CD14-positive monocyte (primary cell): ENCODE measurements at regions of chr7 and their contacts with region 1.

Region 1: GRCh38 chr7:30284298-30285066 is at the start of gene ZNRF2:
- DNase-seq: peak; percentile 98 to 99 (median 99)
- H3K4me3 ChIP-seq: peak within 1 kb of the TSS; percentile 55 to 83 (median 83)
- H3K4me3 Mint-ChIP-seq: peak within 1 kb of the TSS; percentile 78 to 87
- H3K27ac ChIP-seq: peak within 1 kb of the TSS; percentile 73 to 86
- H3K27ac Mint-ChIP-seq: peak within 1 kb of the TSS; percentile 82 to 95 (median 94)
- H3K4me1 ChIP-seq: peaks cover 24 to 36% of the 10 kb centered on the region in 2 donors
- H3K4me1 Mint-ChIP-seq: peaks cover 42% of the 10 kb centered on the region
- H3K27me3 ChIP-seq: no peaks in the 10 kb centered on the region
- H3K27me3 Mint-ChIP-seq: no peaks in the 10 kb centered on the region
- CTCF ChIP-seq: peak; percentile 44
- polyA plus RNA-seq, gene ZNRF2: 1.9 to 9.5 (median 5.7) TPM

Region 2: GRCh38 chr7:30164567-30164966 is 119.9 kb before region 1 on chr7:
- intact Hi-C with region 1: loop called (anchors 5 kb)
- DNase-seq: peak; percentile 63 to 77 (median 76)
- H3K4me3 ChIP-seq: no peak overlapping the region
- H3K4me3 Mint-ChIP-seq: peak overlapping the region in 1 of 2 donors; percentile 50
- H3K27ac ChIP-seq: peak overlapping the region in 1 of 2 donors; percentile 68
- H3K27ac Mint-ChIP-seq: peak overlapping the region; percentile 5 to 73 (median 37)
- H3K4me1 ChIP-seq: peaks cover 65 to 67% of the 10 kb centered on the region in 2 donors
- H3K4me1 Mint-ChIP-seq: peaks cover 74% of the 10 kb centered on the region
- H3K27me3 ChIP-seq: no peaks in the 10 kb centered on the region
- H3K27me3 Mint-ChIP-seq: peaks cover 0 to 1% (median 0%) of the 10 kb centered on the region in 3 donors
- CTCF ChIP-seq: peak; percentile 78

Region 3: DNA sequence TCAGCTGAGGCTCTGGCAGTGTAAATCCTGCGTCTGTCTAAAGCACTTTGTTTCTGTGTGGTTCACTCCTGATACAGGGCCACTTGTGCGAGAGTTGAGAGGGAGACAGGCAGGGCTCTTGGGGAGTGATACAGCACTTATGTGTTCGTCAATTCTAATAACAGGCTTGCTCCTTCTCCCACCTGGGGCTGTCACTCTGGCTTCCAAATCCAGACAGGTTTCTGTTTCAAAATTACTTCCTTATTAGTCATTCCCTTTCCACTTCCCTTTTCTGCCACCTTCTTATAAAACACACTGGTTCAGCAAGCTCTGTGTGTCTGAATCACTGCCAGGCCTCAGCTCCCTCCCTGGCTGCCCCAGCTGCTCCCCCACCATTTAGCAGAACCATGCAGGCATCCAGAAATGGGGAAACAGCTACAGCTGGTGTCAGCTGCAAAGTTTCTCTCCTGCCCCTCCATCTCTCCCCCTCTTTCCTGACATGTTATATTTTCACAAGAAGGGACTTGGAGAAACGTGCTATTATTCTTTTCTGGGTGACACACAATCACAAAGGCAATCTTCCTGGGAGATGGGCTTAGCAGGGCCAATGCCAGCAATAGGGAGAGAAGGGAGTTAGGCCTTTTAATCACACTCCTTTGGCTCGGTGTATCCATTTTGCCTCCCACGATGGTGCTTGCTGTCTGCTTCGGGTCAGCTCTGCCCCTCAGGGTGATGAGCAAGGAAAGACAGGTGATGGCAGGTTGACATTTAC is 58.4 kb before region 1 on chr7:
- intact Hi-C with region 1: loop called in 1 of 2 experiments (anchors 5 kb)
- DNase-seq: peak; percentile 97 to 99 (median 99)
- H3K4me3 ChIP-seq: peak overlapping the region in 1 of 3 experiments; percentile 45
- H3K4me3 Mint-ChIP-seq: peak overlapping the region; percentile 28 to 87
- H3K27ac ChIP-seq: peak overlapping the region; percentile 89 to 95
- H3K27ac Mint-ChIP-seq: peak overlapping the region; percentile 97 to 99 (median 99)
- H3K4me1 ChIP-seq: peaks cover 46 to 50% of the 10 kb centered on the region in 2 donors
- H3K4me1 Mint-ChIP-seq: peaks cover 48% of the 10 kb centered on the region
- H3K27me3 ChIP-seq: no peaks in the 10 kb centered on the region
- H3K27me3 Mint-ChIP-seq: peaks cover 0 to 7% (median 3%) of the 10 kb centered on the region in 3 donors
- CTCF ChIP-seq: no peak

Region 4: GRCh38 chr7:30330134-30331111 is 45.9 kb after region 1 on chr7:
- intact Hi-C with region 1: loop called in 1 of 2 experiments (anchors 10 kb)
- DNase-seq: peak in 2 of 3 donors; percentile 29 to 42
- H3K4me3 ChIP-seq: peak overlapping the region in 1 of 3 experiments; percentile 57
- H3K4me3 Mint-ChIP-seq: peak overlapping the region; percentile 1 to 77
- H3K27ac ChIP-seq: peak overlapping the region in 1 of 2 donors; percentile 42
- H3K27ac Mint-ChIP-seq: peak overlapping the region in 6 of 7 donors; percentile 6 to 81 (median 70)
- H3K4me1 ChIP-seq: peaks cover 24 to 32% of the 10 kb centered on the region in 2 donors
- H3K4me1 Mint-ChIP-seq: peaks cover 50% of the 10 kb centered on the region
- H3K27me3 ChIP-seq: no peaks in the 10 kb centered on the region
- H3K27me3 Mint-ChIP-seq: peaks cover 0 to 1% (median 1%) of the 10 kb centered on the region in 3 donors
- CTCF ChIP-seq: no peak

Region 5: DNA sequence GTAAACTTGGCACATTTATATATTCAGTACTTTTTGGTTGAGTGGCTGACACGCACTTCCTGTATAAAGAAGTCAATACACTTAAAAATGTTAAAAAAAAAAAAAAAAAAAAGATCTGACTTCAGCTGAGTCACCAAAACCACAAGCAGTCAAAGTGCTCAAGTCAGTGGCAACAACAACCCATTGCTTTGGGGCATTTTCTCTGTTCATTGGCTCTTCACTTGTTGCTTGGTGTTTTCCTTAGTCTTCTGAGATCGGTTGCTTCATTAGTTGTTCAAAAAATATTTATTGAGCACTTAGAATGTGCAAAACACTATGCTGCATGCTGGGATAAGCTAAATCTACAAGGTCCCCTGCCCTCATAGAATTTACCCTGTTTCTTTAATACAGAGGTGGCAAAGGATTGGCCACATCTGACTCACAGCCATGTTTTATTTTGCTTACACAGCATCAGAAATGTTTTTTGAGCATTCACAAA is 63.6 kb after region 1 on chr7:
- intact Hi-C with region 1: loop called in 1 of 2 experiments (anchors 2 kb)
- DNase-seq: peak; percentile 76 to 90 (median 83)
- H3K4me3 ChIP-seq: peak overlapping the region in 1 of 3 experiments; percentile 48
- H3K4me3 Mint-ChIP-seq: peak overlapping the region; percentile 4 to 74
- H3K27ac ChIP-seq: peak overlapping the region in 1 of 2 donors; percentile 89
- H3K27ac Mint-ChIP-seq: peak overlapping the region; percentile 83 to 93 (median 90)
- H3K4me1 ChIP-seq: peaks cover 60 to 82% of the 10 kb centered on the region in 2 donors
- H3K4me1 Mint-ChIP-seq: peaks cover 69% of the 10 kb centered on the region
- H3K27me3 ChIP-seq: no peaks in the 10 kb centered on the region
- H3K27me3 Mint-ChIP-seq: no peaks in the 10 kb centered on the region
- CTCF ChIP-seq: no peak

Region 6: DNA sequence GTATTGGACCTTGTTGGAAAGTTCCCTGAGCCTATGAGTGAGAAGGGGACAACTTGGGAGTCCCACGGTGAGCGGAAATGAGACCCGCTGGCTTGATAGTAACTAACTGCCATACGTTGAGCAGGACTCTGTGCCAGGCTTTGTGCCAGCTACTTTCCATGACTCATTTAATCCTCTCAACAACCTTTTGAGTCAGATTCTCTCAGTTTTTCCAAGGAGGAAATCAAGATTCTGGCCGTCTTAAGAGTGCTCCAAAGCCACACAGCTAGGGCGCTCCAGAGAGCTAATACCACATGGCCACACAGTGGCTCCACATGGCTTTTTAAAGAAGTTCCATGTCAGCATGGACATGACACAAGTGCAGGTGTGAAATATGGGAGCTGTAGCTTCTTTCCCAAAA is 138.4 kb after region 1 on chr7:
- intact Hi-C with region 1: loop called in 1 of 2 experiments (anchors 10 kb)
- DNase-seq: no peak
- H3K4me3 ChIP-seq: no peak overlapping the region
- H3K4me3 Mint-ChIP-seq: no peak overlapping the region
- H3K27ac ChIP-seq: no peak overlapping the region
- H3K27ac Mint-ChIP-seq: no peak overlapping the region
- H3K4me1 ChIP-seq: peaks cover 30 to 37% of the 10 kb centered on the region in 2 donors
- H3K4me1 Mint-ChIP-seq: peaks cover 42% of the 10 kb centered on the region
- H3K27me3 ChIP-seq: no peaks in the 10 kb centered on the region
- H3K27me3 Mint-ChIP-seq: no peaks in the 10 kb centered on the region
- CTCF ChIP-seq: no peak

Region 7: DNA sequence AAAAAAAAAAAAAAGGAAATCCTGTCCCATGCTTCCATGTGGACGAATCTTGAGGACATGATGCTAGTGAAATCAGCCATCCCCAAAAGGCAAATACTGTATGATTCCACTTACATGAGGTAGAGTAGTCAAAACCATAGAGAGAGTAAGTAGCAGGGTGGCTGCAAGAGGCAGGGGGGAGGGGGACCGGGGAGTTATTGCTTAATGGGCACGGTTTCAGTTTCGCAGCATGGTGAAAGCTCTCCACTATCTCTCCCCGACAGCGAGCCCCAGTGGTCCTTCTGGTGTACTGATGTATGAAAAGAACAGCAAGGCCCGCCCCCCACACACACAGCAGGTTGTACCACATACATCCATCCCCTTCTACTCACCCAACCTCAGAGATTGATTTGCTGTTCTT is 161.3 kb after region 1 on chr7:
- intact Hi-C with region 1: loop called in 1 of 2 experiments (anchors 5 kb)
- DNase-seq: peak; percentile 89 to 91 (median 90)
- H3K4me3 ChIP-seq: no peak overlapping the region
- H3K4me3 Mint-ChIP-seq: peak overlapping the region in 1 of 2 donors; percentile 21
- H3K27ac ChIP-seq: peak overlapping the region in 1 of 2 donors; percentile 21
- H3K27ac Mint-ChIP-seq: peak overlapping the region; percentile 17 to 85 (median 71)
- H3K4me1 ChIP-seq: peaks cover 10 to 14% of the 10 kb centered on the region in 2 donors
- H3K4me1 Mint-ChIP-seq: peaks cover 6% of the 10 kb centered on the region
- H3K27me3 ChIP-seq: no peaks in the 10 kb centered on the region
- H3K27me3 Mint-ChIP-seq: no peaks in the 10 kb centered on the region
- CTCF ChIP-seq: peak; percentile 76

Region 8: DNA sequence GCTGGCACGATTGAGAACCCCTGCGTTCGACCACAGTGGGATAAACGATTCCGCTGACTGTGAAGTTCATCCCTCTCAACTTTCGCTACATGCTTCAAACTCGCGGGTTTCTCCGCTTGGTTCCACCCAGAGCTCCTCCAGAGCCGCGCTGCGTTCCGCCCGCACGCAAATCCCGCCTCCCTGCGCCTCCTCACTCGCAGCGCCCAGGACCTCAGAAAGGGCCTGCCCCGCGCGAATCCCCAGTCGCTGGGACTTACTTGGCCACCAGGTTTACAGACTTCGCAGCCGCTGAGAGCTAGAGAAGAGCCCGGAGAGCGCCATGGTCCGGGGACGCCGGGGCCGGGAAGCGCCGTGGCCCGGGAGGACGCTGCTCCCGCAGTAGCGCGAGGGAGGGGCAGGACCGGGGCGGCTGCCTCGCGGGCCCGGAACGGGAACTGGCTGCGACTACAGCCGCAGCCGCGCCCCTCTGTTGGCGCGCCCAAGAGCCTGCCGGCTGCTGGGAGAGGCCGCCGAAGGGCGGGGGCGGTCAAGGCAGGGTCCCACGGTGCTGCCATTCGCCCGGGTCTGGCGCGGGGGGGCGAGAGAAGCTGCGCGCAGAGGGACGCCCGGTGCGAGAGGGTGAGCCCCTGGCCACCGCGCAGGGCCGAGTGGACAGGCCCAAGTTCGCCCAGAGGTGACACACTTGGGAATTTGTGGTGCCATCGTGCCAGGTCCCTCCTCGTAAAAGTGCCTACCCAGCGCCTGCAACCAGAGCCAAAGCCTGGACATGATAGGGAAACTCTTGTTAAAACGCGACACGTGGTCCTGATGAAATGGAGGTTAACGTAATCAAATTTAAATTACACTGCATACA is 194.1 kb after region 1 on chr7 and contains the start of gene NOD1:
- intact Hi-C with region 1: no loop called
- DNase-seq: peak; percentile 51 to 61 (median 55)
- H3K4me3 ChIP-seq: peak within 1 kb of the TSS; percentile 47 to 89 (median 79)
- H3K4me3 Mint-ChIP-seq: peak within 1 kb of the TSS; percentile 95 to 96
- H3K27ac ChIP-seq: peak within 1 kb of the TSS; percentile 72 to 92
- H3K27ac Mint-ChIP-seq: peak within 1 kb of the TSS; percentile 78 to 93 (median 87)
- H3K4me1 ChIP-seq: peaks cover 29 to 37% of the 10 kb centered on the region in 2 donors
- H3K4me1 Mint-ChIP-seq: peaks cover 44% of the 10 kb centered on the region
- H3K27me3 ChIP-seq: no peaks in the 10 kb centered on the region
- H3K27me3 Mint-ChIP-seq: no peaks in the 10 kb centered on the region
- CTCF ChIP-seq: no peak
- polyA plus RNA-seq, gene NOD1: 2.8 to 15.0 (median 4.6) TPM